Calu3 (cell line): ENCODE measurements at regions of chr11 and their contacts with region 1.

Region 1: GRCh38 chr11:121194731-121195596 is 93.9 kb downstream of the TECTA start:
- DNase-seq: peak; percentile 36
- H3K4me3 Mint-ChIP-seq: no peak overlapping the region
- H3K27ac Mint-ChIP-seq: no peak overlapping the region
- H3K4me1 Mint-ChIP-seq: no peaks in the 10 kb centered on the region
- H3K27me3 Mint-ChIP-seq: peaks cover 16% of the 10 kb centered on the region
- CTCF ChIP-seq: peak; percentile 57

Region 2: GRCh38 chr11:120929664-120930154 is 265.3 kb before region 1 on chr11:
- CTCF ChIA-PET with region 1: interaction called, 3 read pairs
- intact Hi-C with region 1: loop called (anchors 10 kb)
- DNase-seq: peak; percentile 40
- H3K4me3 Mint-ChIP-seq: no peak overlapping the region
- H3K27ac Mint-ChIP-seq: no peak overlapping the region
- H3K4me1 Mint-ChIP-seq: no peaks in the 10 kb centered on the region
- H3K27me3 Mint-ChIP-seq: peaks cover 32% of the 10 kb centered on the region
- CTCF ChIP-seq: no peak

Region 3: DNA sequence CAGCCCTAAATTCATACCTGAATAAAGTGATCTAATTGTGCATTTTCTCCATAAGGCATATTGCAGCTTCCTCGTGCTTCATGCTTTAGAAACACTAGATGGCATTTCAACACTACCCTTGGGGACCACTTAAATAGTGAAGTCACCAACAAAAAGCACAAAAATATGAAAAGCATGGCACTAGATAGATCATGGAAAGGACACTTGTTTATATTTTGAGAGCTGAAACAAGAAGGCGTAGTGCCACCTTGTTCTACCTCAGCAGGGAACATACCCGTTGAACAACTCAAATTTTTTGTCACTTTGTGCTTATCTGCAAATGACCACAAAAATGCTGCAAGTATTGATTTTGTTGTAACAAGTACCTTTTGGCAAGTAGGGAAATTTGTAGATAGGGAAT is 162.4 kb before region 1 on chr11:
- CTCF ChIA-PET with region 1: no interaction called
- intact Hi-C with region 1: loop called (anchors 10 kb)
- DNase-seq: no peak
- H3K4me3 Mint-ChIP-seq: no peak overlapping the region
- H3K27ac Mint-ChIP-seq: no peak overlapping the region
- H3K4me1 Mint-ChIP-seq: no peaks in the 10 kb centered on the region
- H3K27me3 Mint-ChIP-seq: peaks cover 50% of the 10 kb centered on the region
- CTCF ChIP-seq: no peak